ENCODE measurements at regions of chr16 and their contacts with region 1.

Region 1: DNA sequence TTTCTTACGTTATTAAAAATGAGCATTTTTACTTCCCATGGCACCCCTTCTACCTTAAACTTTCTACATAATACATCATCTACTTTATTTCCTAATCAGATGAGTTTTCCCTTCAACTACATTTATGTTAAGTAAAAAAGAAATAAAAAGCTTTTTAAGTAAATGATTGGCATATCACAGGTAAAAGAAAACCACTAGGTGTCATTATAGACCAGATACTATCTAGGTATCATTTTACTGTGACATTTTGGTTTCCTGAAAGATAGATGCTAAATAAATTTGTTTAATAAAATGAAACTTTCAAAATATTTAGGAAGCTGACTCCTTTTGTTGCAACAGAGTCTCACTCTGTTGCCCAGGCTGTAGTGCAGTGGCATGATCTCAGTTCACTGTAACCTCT is 3.8 kb upstream of the CMTM1 start:
- DNase-seq: no peak
- H3K4me3 Mint-ChIP-seq: no peak overlapping the region
- H3K27ac Mint-ChIP-seq: peak overlapping the region; percentile 59
- H3K4me1 Mint-ChIP-seq: peaks cover 69% of the 10 kb centered on the region
- H3K27me3 Mint-ChIP-seq: no peaks in the 10 kb centered on the region

Region 2: DNA sequence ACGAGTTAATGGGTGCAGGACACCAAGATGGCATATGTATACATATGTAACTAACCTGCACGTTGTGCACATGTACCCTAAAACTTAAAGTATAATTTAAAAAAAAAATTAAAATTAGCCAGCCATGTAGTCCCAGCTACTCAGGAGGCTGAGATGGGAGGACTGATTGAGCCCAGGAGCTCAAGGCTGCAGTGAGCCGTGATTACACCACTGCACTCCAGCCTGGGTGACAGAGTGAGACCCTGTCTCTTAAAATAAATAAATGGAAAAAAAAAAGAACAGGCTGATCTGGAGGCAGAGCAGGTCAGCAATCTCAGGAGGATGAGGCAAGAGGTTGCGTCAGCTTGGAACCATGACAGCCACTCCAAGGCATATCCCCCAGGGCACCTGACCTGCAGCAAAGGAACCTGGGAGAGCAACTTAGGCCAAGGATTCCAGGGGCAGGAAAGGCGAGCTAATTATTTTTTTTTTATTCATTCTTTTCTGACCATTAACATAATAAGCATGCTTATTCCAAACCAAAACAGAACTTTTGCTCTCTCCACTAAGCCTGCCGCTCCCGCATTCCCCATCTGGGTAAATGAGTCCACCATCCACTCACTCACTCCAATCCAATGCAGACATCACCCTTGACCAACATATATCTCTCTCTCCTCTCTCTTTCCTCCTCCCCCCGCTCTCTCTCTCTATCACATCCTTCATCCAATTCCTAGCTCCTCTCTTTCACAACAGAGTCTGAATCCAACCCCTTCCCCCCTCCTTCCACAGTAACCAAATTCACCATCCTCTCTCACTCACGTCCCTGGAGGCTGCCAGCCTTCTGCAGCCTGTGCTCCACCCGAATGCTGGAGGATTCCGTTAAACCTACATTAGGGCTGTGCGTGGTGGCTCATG is 60.1 kb before region 1 on chr16:
- CTCF ChIA-PET with region 1: no interaction called
- POLR2A ChIA-PET with region 1: no interaction called
- DNase-seq: no peak
- H3K4me3 Mint-ChIP-seq: no peak overlapping the region
- H3K27ac Mint-ChIP-seq: no peak overlapping the region
- H3K4me1 Mint-ChIP-seq: peaks cover 7% of the 10 kb centered on the region
- H3K27me3 Mint-ChIP-seq: peaks cover 10% of the 10 kb centered on the region

Region 3: DNA sequence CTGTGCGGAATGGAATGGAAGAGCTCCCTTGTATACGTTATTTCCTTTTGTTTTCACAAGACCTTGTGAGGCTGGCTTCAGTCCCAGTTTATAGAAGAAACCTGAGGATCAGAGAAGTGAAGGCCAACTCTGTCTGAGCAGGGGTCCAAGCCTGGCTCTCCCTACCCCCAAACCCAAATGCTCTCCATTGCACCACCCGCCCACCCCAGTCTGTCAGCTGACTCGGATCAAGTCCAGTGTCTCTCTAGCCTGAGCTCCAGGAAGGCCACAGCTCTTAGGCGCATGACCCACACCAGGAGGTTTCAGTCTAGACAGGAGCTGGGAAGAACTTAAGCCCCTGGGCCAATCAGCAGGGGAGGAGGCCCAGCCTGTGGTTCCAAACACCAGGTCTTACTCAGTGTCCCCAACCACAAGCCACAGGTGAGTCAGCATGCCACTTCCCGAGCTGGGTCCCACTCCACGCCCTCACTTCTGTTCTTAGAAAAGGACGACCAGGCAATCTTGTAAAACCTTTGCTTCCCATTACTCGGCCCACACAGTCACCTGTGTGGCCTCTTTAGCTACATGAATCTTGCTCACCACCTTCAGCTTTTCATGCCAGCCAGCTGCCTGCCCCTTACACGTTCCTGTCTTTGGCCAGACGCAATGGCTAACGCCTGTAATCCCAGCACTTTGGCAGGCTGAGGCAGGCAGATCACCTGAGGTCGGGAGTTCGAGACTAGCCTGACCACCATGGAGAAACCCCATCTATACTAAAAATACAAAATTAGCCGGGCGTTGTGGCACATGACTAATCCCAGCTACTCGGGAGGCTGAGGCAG is 40.2 kb before region 1 on chr16:
- CTCF ChIA-PET with region 1: interaction called, 5 read pairs
- POLR2A ChIA-PET with region 1: interaction called, 11 read pairs
- DNase-seq: peak; percentile 97
- H3K4me3 Mint-ChIP-seq: peak overlapping the region; percentile 64
- H3K27ac Mint-ChIP-seq: peak overlapping the region; percentile 95
- H3K4me1 Mint-ChIP-seq: peaks cover 95% of the 10 kb centered on the region
- H3K27me3 Mint-ChIP-seq: no peaks in the 10 kb centered on the region

Region 4: DNA sequence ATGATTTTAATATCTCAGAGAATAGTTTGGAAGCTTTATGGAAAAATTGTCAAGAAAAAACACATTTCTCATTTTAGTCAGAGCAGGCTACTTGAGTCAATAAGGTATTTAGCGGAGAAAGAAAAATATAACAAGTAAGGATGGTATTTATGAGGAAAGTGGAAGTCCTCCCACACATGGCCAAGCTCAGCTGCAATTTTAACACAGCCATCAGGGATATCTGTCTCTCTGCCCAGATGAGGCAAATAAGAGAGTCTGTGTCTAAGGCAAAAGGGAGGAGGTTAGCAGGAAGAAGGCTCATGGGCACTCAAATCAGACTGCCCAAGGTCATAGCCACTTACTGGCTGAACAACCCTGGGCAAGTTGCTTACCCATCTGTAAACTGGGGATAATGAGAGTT is 11.7 kb after region 1 on chr16:
- CTCF ChIA-PET with region 1: interaction called, 15 read pairs
- POLR2A ChIA-PET with region 1: interaction called, 6 read pairs
- DNase-seq: no peak
- H3K4me3 Mint-ChIP-seq: no peak overlapping the region
- H3K27ac Mint-ChIP-seq: no peak overlapping the region
- H3K4me1 Mint-ChIP-seq: peaks cover 11% of the 10 kb centered on the region
- H3K27me3 Mint-ChIP-seq: peaks cover 19% of the 10 kb centered on the region

Region 5: DNA sequence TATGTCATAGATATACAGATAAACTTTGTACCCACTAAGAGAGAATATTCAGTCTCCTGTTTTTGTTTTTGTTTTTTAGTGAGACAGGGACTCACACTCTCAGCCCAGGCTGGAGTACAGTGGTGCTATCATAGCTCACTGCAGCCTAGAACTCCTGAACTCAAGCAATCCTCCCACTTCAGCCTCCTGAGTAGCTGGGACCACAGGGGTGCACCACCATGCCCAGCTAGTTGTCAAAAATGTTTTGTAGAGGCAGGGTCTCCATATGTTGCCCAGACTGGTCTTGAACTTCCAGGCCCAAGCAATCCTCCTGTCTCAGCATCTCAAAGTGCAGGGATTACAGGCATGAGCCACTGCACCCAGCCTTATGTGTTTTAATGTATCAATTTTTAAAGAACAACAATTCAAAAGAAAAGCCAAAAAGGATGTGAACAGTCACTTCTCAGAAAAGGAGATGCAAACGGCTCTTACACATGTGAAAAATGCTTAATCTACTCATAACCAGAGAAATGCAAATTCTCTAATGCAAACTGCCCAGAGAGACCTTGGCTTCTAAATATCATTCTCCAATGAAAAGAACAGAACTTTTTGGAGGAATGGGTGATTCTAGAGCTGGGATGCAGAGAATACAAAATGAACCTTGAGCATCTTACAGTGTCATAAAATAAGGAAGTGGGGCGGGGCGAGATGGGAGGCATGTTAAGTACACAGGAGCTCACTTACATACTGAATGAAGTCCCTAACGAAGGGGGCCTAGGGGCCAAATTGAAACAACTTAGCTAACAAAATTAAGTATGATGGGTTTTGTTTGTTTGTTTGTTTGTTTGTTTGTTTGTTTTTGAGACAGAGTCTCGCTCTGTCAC is 34.8 kb after region 1 on chr16:
- CTCF ChIA-PET with region 1: interaction called, 21 read pairs
- POLR2A ChIA-PET with region 1: interaction called, 5 read pairs
- DNase-seq: peak; percentile 38
- H3K4me3 Mint-ChIP-seq: peak overlapping the region; percentile 57
- H3K27ac Mint-ChIP-seq: peak overlapping the region; percentile 99
- H3K4me1 Mint-ChIP-seq: peaks cover 50% of the 10 kb centered on the region
- H3K27me3 Mint-ChIP-seq: no peaks in the 10 kb centered on the region